ENCODE measurements at regions of chr5 and their contacts with region 1.

Region 1: GRCh38 chr5:132410451-132411381 is 41.2 kb downstream of the SLC22A5 start:
- DNase-seq: peak; percentile 98
- H3K4me3 Mint-ChIP-seq: peak overlapping the region; percentile 100
- H3K27ac Mint-ChIP-seq: peak overlapping the region; percentile 99
- H3K4me1 Mint-ChIP-seq: peaks cover 48% of the 10 kb centered on the region
- H3K27me3 Mint-ChIP-seq: no peaks in the 10 kb centered on the region

Region 2: GRCh38 chr5:132396589-132397031 is 14.1 kb before region 1 on chr5:
- intact Hi-C with region 1: loop called (anchors 2 kb)
- DNase-seq: peak; percentile 66
- H3K4me3 Mint-ChIP-seq: peak overlapping the region; percentile 24
- H3K27ac Mint-ChIP-seq: peak overlapping the region; percentile 57
- H3K4me1 Mint-ChIP-seq: peaks cover 61% of the 10 kb centered on the region
- H3K27me3 Mint-ChIP-seq: peaks cover 16% of the 10 kb centered on the region

Region 3: GRCh38 chr5:132927355-132928061 is 516.8 kb after region 1 on chr5:
- intact Hi-C with region 1: no loop called
- DNase-seq: no peak
- H3K4me3 Mint-ChIP-seq: no peak overlapping the region
- H3K27ac Mint-ChIP-seq: no peak overlapping the region
- H3K4me1 Mint-ChIP-seq: peaks cover 3% of the 10 kb centered on the region
- H3K27me3 Mint-ChIP-seq: no peaks in the 10 kb centered on the region

Measured in activated CD4-positive, alpha-beta T cell treated with anti-CD3 and anti-CD28 coated beads, Interleukin-2, amount 10 ng/mL, durations not matched to agents 24 days and 14 days (primary cell).